ENCODE measurements at regions of chr20 and their contacts with region 1.

Region 1: DNA sequence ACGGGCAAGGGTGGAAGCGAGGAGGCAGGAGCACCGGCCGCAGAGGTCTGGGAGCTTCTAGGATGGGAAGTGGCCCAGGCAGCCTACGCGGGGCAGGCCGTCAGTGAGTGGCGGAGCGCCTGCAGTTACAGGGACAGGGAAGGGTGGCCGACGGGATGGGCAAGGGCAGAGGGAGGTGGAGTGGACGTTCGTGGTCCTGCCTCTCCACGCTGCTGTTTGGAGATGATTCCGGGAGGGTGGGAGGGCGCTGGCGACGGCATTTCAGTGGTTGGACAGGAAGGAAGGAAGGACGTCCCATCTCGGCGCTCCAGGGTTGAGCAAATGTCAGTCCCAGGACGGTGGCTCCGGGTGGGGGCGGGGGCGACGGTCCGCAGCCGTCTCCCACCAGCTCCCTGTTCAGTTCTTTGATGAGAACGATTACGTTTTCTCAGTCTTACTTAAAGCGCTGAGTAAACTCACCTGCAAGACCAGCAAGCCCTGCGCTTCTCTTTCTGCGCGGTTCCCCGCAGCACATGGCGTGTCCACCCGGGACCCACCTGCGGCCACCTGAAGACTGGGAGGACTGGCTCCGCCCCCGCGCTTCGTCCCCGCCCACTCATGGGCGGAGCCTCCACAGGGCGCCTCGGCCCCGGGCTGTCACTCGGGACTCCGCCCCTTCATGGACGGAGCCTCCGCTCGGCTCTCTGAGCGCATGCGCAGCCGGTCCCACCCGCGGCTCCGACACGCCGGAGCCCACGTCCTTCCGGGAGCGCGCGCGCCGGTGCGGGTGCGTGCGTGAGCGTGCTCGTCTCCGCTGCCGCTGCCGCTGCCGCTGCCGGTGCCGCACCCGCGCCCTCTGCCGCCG is at the start of gene DNAJC5:
- DNase-seq: peak; percentile 94
- H3K4me3 Mint-ChIP-seq: peak within 1 kb of the TSS; percentile 95
- H3K27ac Mint-ChIP-seq: peak within 1 kb of the TSS; percentile 93
- H3K4me1 Mint-ChIP-seq: peaks cover 41% of the 10 kb centered on the region
- H3K27me3 Mint-ChIP-seq: no peaks in the 10 kb centered on the region
- total RNA-seq, gene DNAJC5: 19.4 to 19.5 TPM

Region 2: DNA sequence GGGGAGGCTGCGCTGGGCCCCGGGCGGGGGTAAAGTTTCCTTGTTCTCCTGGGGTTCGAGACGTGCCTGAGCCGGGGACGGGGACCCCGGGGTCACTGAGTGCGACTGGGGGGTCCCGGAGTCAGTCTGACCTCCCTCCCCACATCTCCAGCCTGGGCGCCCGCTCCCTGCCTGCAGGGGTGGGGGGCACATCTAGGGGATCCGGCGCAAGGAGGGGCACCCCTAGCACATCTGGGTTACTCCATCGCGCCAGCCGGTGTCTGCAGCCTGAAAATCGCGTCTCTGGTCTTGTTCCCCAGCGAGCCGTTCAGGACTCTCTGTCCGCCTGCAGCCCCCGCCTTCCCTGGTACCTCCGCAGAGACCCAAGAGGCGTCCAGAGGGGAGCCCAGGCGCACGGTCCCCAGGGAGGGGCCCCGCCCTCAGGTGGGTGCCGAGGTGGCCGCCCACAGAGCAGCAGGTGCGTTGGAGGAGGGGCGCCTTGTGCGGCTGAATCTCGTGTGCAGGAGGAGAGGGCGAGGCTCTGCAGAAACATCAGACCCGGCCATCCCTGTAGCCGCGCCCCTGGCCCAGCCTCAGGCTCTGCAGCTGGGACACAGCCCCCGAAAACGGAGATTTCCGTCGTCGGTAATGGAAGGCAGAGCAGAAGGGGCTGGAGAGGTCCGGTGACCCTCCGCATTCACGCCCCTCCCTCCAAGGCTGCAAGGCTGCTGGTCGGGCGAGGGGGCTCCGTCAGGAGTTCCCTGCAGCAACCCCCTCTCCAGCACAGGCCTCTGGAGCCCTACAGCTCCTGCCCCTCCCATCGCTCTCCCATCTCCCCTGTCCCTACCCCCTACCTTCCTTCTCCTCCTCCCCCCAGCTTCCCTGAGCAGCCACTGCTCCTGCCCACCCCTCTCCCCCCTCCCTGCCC is 532.8 kb before region 1 on chr20:
- CTCF ChIA-PET with region 1: no interaction called
- intact Hi-C with region 1: no loop called
- DNase-seq: no peak
- H3K4me3 Mint-ChIP-seq: no peak overlapping the region
- H3K27ac Mint-ChIP-seq: no peak overlapping the region
- H3K4me1 Mint-ChIP-seq: peaks cover 2% of the 10 kb centered on the region
- H3K27me3 Mint-ChIP-seq: peaks cover 23% of the 10 kb centered on the region

Region 3: GRCh38 chr20:63624486-63624885 is 270.1 kb before region 1 on chr20:
- CTCF ChIA-PET with region 1: no interaction called
- intact Hi-C with region 1: no loop called
- DNase-seq: no peak
- H3K4me3 Mint-ChIP-seq: peak overlapping the region; percentile 12
- H3K27ac Mint-ChIP-seq: no peak overlapping the region
- H3K4me1 Mint-ChIP-seq: peaks cover 37% of the 10 kb centered on the region
- H3K27me3 Mint-ChIP-seq: no peaks in the 10 kb centered on the region

Region 4: GRCh38 chr20:63635431-63636141 is 259.0 kb before region 1 on chr20:
- CTCF ChIA-PET with region 1: no interaction called
- intact Hi-C with region 1: loop called (anchors 5 kb)
- DNase-seq: peak; percentile 93
- H3K4me3 Mint-ChIP-seq: peak overlapping the region; percentile 34
- H3K27ac Mint-ChIP-seq: peak overlapping the region; percentile 86
- H3K4me1 Mint-ChIP-seq: peaks cover 68% of the 10 kb centered on the region
- H3K27me3 Mint-ChIP-seq: no peaks in the 10 kb centered on the region

Region 5: DNA sequence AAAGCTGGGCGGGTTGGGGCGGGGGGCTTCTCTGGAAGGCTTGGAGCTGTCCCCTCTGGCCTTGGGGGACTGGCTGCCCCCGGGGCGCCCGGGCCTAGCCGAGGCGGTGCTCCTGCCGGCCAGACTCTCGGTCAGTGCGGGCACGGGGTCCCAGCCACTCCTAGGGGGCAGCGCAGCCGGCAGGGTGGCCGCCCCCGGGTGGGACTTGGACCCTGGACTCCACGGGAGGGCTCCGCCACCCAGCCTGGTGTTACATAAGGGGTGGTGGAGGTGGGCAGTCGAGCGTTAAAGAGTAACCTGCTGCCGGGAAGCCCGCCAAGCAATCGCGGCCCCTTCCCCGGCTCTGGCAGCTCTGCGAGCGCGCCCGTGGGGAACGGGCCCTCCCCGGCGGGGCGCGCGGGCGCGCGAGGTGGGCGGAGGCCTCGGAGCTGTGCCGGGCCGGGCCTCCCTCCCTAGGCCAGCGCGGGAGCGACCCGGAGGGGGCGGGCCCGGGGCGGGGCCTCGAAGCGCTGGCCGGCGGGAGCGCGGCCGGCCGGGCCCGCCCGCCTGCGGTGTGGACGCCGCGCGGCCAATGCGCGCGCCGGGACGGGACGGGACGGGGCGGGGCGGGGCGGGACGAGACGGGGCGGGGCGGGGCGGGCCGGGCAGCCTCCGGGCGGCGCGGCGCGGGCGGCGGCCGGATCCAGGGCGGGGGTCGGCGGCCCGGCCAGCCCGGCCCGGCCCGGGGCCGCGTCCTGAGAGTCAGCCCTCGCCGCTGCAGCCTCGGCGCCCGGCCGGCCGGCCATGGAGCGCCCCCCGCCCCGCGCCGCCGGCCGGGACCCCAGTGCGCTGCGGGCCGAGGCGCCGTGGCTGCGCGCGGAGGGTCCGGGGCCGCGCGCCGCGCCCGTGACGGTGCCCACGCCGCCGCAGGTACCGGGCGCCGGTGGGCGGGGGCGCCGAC is 155.2 kb before region 1 on chr20 and contains the start of gene SLC2A4RG:
- CTCF ChIA-PET with region 1: no interaction called
- intact Hi-C with region 1: no loop called
- DNase-seq: peak; percentile 58
- H3K4me3 Mint-ChIP-seq: peak within 1 kb of the TSS; percentile 50
- H3K27ac Mint-ChIP-seq: no peak within 1 kb of the TSS
- H3K4me1 Mint-ChIP-seq: peaks cover 22% of the 10 kb centered on the region
- H3K27me3 Mint-ChIP-seq: no peaks in the 10 kb centered on the region
- total RNA-seq, gene SLC2A4RG: 22.4 to 24.8 TPM

Region 6: DNA sequence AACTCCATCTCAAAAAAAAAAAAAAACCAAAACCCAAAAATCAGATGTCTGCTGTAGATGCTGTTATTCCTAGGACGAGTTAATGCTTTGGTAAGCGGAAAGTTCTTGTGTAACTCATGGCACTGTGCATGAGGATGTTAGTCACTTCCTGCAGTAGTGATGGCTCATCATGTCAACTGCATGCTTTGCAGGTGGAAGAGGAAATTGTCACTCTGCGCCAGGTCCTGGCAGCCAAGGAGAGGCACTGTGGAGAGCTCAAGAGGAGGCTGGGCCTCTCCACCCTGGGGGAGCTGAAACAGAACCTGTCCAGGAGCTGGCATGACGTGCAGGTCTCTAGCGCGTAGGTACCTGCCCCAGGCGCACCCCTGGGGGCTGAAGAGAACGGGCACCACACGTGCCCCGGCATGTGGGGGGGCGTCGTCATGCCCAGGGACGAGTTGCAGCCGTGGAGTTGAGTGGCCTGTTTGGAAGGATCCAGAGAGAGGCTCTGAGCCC is 21.1 kb before region 1 on chr20:
- CTCF ChIA-PET with region 1: interaction called, 3 read pairs
- intact Hi-C with region 1: loop called (anchors 2 kb)
- DNase-seq: peak; percentile 77
- H3K4me3 Mint-ChIP-seq: no peak overlapping the region
- H3K27ac Mint-ChIP-seq: peak overlapping the region; percentile 86
- H3K4me1 Mint-ChIP-seq: peaks cover 15% of the 10 kb centered on the region
- H3K27me3 Mint-ChIP-seq: no peaks in the 10 kb centered on the region

Measured in activated naive CD4-positive, alpha-beta T cell treated with anti-CD3 and anti-CD28 coated beads for 36 hours (primary cell).